ENCODE measurements at regions of chr1 and their contacts with region 1.

Region 1: GRCh38 chr1:200488375-200489165 is 78.7 kb upstream of the ZNF281 start:
- DNase-seq: peak; percentile 97
- ATAC-seq: peak; percentile 82
- H3K4me3 ChIP-seq: peak overlapping the region; percentile 20; the same call in 1 of the 2 replicates
- H3K27ac ChIP-seq: peak overlapping the region; percentile 18; the same call in 1 of the 2 replicates
- H3K4me1 ChIP-seq: peaks cover 17% of the 10 kb centered on the region
- H3K27me3 ChIP-seq: no peaks in the 10 kb centered on the region
- CTCF ChIP-seq: peak; percentile 99

Region 2: GRCh38 chr1:200038981-200039848 is 449.4 kb before region 1 on chr1:
- CTCF ChIA-PET with region 1: no interaction called
- POLR2A ChIA-PET with region 1: no interaction called
- intact Hi-C with region 1: loop called (anchors 10 kb)
- DNase-seq: peak; percentile 71
- ATAC-seq: peak; percentile 84
- H3K4me3 ChIP-seq: peak overlapping the region; percentile 70
- H3K27ac ChIP-seq: no peak overlapping the region
- H3K4me1 ChIP-seq: peaks cover 7% of the 10 kb centered on the region; the same call in 1 of the 2 replicates
- H3K27me3 ChIP-seq: peaks cover 79% of the 10 kb centered on the region
- CTCF ChIP-seq: no peak; the same call in 1 of the 2 replicates

Region 3: GRCh38 chr1:200279810-200280411 is 208.7 kb before region 1 on chr1:
- CTCF ChIA-PET with region 1: interaction called, 10 read pairs
- POLR2A ChIA-PET with region 1: interaction called, 3 read pairs
- intact Hi-C with region 1: loop called (anchors 1 kb)
- DNase-seq: peak; percentile 99
- ATAC-seq: peak; percentile 88
- H3K4me3 ChIP-seq: no peak overlapping the region
- H3K27ac ChIP-seq: no peak overlapping the region
- H3K4me1 ChIP-seq: no peaks in the 10 kb centered on the region
- H3K27me3 ChIP-seq: no peaks in the 10 kb centered on the region
- CTCF ChIP-seq: peak; percentile 97

Region 4: GRCh38 chr1:200336111-200336845 is 152.3 kb before region 1 on chr1:
- CTCF ChIA-PET with region 1: no interaction called
- POLR2A ChIA-PET with region 1: no interaction called
- intact Hi-C with region 1: loop called (anchors 1 kb)
- DNase-seq: peak; percentile 98
- ATAC-seq: peak; percentile 82
- H3K4me3 ChIP-seq: no peak overlapping the region; the same call in 1 of the 2 replicates
- H3K27ac ChIP-seq: peak overlapping the region; percentile 39
- H3K4me1 ChIP-seq: peaks cover 34% of the 10 kb centered on the region
- H3K27me3 ChIP-seq: no peaks in the 10 kb centered on the region
- CTCF ChIP-seq: no peak

Region 5: DNA sequence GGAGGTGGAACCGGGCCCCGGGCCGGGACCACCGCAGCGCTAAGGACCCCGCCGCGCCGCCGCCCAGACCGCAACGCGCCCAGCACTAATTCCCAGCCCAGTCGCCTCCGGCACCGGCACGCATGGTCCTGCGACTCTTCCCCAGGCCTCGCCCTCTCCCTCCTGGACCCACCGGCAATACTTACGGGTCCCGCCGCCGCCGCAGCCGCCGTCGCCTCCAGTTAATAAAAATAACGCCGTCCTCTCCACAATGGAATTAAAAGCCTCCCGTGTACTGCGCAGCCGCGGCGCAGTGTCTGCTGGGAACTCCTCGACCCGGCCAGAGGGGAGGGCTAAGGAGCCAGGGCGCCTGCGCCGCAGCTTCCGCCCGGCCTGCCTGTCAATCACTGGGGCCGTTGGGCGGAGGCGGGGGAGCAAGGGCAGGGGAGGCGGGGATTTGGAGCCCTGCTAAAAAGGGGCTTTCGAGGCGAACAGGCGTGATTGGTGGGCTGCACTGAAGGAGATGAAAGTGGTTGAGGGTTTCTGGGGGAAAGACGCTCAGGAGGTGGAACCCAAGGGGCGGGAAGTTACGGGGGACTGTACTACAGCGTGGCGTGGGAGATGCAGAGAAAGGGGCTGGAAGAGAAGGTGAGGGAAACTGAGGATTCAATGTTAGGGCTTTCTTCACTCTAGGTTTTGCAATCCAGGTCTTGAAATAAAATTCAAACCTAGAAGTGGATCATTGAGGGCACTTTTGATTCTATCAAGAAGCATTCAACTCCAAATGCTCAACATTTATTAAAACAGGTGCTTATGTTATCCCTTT is 78.6 kb before region 1 on chr1 and contains the start of gene ZNF281:
- CTCF ChIA-PET with region 1: interaction called, 7 read pairs
- POLR2A ChIA-PET with region 1: no interaction called
- intact Hi-C with region 1: loop called (anchors 1 kb)
- DNase-seq: peak; percentile 99
- ATAC-seq: peak; percentile 96
- H3K4me3 ChIP-seq: peak within 1 kb of the TSS; percentile 85
- H3K27ac ChIP-seq: peak within 1 kb of the TSS; percentile 48
- H3K4me1 ChIP-seq: peaks cover 60% of the 10 kb centered on the region
- H3K27me3 ChIP-seq: no peaks in the 10 kb centered on the region
- CTCF ChIP-seq: no peak
- total RNA-seq, gene ZNF281: 23.3 and 26.6 TPM in 2 replicates

Region 6: DNA sequence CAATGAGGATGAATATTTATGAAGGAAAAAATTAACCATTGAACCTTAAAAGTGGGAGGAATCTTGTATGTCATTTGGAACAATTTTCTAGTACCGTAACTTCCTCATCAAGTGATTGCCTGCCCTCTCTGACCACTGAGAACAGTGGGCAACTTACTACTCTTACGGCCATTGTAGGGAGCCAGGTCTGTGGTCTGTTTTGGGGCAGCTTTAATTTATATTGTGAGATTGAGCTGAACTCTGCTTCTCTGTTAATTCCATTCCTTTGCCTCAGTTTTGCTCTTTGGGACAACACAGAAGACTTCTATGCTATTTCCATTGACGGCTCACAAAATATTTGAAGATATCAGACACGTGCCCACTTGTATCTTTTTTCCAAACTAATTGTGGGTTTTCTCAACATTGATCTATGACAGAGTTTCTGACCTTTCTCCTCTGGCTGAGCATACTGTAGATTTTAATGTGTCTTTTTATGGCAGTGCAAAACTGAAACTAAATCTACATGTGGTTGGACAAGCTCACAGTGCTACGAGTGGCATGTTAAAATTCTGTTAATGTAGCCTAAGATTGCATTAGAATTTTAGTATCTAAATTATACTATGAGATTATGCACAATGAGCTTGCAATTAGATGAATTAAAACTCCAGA is 50.9 kb before region 1 on chr1:
- CTCF ChIA-PET with region 1: no interaction called
- POLR2A ChIA-PET with region 1: interaction called, 4 read pairs
- intact Hi-C with region 1: loop called (anchors 2 kb)
- DNase-seq: peak; percentile 27
- ATAC-seq: no peak; the same call in 1 of the 2 replicates
- H3K4me3 ChIP-seq: peak overlapping the region; percentile 8; the same call in 1 of the 2 replicates
- H3K27ac ChIP-seq: peak overlapping the region; percentile 13; the same call in 1 of the 2 replicates
- H3K4me1 ChIP-seq: peaks cover 35% of the 10 kb centered on the region
- H3K27me3 ChIP-seq: no peaks in the 10 kb centered on the region
- CTCF ChIP-seq: no peak

Region 7: GRCh38 chr1:200542162-200542561 is 53.6 kb after region 1 on chr1:
- CTCF ChIA-PET with region 1: no interaction called
- POLR2A ChIA-PET with region 1: no interaction called
- intact Hi-C with region 1: no loop called
- DNase-seq: no peak
- ATAC-seq: no peak
- H3K4me3 ChIP-seq: no peak overlapping the region
- H3K27ac ChIP-seq: no peak overlapping the region
- H3K4me1 ChIP-seq: no peaks in the 10 kb centered on the region
- H3K27me3 ChIP-seq: no peaks in the 10 kb centered on the region
- CTCF ChIP-seq: no peak

Region 8: DNA sequence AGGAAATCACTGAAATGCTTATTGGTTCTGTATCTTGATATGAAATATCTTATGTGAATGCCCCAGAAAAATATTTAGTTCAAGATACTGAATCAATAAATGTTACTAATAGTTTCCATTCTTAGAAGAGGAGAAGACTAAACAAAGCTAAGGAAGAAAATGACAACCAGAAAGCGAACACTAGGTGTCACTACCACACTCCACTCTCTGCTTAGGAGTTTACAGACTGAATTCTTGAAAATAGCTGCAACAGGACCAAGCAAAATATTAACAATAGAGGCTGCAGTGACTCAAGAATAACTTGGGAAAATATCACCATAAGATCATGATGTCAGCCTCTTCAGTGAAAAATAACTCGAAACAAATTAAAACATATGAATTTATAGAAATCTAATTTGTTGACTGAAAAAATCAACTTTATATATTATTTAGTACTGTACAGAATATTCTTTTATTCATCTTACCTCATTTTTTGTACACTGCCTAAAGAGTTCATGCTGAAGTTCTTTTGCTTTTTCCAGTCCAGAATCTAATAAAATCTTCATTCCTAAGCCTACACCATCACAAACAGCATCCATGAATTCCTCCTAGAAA is 70.4 kb after region 1 on chr1:
- CTCF ChIA-PET with region 1: no interaction called
- POLR2A ChIA-PET with region 1: no interaction called
- intact Hi-C with region 1: loop called (anchors 1 kb)
- DNase-seq: peak; percentile 84
- ATAC-seq: peak; percentile 92
- H3K4me3 ChIP-seq: no peak overlapping the region
- H3K27ac ChIP-seq: no peak overlapping the region
- H3K4me1 ChIP-seq: no peaks in the 10 kb centered on the region
- H3K27me3 ChIP-seq: no peaks in the 10 kb centered on the region
- CTCF ChIP-seq: peak; percentile 99

Region 9: GRCh38 chr1:200610846-200611245 is 122.3 kb after region 1 on chr1:
- CTCF ChIA-PET with region 1: no interaction called
- POLR2A ChIA-PET with region 1: no interaction called
- intact Hi-C with region 1: no loop called
- DNase-seq: no peak
- ATAC-seq: peak; percentile 29
- H3K4me3 ChIP-seq: no peak overlapping the region
- H3K27ac ChIP-seq: no peak overlapping the region
- H3K4me1 ChIP-seq: no peaks in the 10 kb centered on the region
- H3K27me3 ChIP-seq: no peaks in the 10 kb centered on the region
- CTCF ChIP-seq: no peak

Region 10: GRCh38 chr1:200634261-200635122 is 145.9 kb after region 1 on chr1:
- CTCF ChIA-PET with region 1: no interaction called
- POLR2A ChIA-PET with region 1: no interaction called
- intact Hi-C with region 1: no loop called
- DNase-seq: no peak
- ATAC-seq: no peak
- H3K4me3 ChIP-seq: no peak overlapping the region
- H3K27ac ChIP-seq: no peak overlapping the region
- H3K4me1 ChIP-seq: peaks cover 1% of the 10 kb centered on the region; the same call in 1 of the 2 replicates
- H3K27me3 ChIP-seq: no peaks in the 10 kb centered on the region
- CTCF ChIP-seq: peak; percentile 60

Measured in PC-3 (cell line).